Heart right ventricle (tissue), 16 donors: ENCODE measurements at regions of chr1 and their contacts with region 1.

Region 1: DNA sequence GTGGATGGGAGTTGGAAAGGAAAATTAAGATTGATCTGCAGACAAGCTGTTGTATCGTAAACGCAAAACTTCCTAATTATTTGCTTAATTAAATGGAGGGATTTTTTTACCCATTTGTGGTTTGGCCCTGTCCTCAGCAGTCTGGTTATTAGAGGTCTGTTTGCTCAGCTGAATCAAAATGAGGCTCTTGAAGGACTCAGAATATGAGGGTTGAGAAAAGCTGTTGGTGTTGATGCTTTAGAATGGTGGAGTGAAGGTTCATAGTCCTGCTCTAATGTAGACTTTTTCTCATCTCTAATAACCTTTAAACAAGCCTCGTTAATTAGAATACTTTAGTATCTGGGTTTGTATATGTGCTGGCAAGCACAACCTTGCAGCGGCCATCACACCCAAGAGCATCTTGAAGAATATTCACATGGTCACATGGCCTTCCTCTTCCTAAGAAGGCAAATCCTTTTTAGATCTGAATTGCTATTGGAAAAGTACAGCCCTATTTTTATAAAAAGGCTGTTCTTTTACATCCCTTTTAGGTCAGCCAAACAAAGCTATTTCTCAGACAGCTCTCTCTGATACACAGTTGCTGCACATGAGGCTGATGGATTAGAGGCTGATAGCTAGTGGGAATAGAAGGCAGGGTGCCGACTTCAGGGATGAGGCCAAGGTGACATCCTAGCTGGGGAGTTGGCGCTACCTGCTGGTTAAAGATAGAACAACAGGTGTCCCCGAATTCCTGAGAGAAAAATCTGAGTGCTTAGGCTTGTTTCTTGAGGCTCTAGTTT is 53.8 kb downstream of the MACF1 start:
- DNase-seq: peak; percentile 26 to 75
- ATAC-seq: peak; percentile 73 to 87 (median 86)
- H3K4me3 ChIP-seq: no peak overlapping the region
- H3K27ac ChIP-seq: peak overlapping the region in 7 of 10 donors; percentile 11 to 63 (median 49)
- H3K4me1 ChIP-seq: peaks cover 0 to 43% (median 22%) of the 10 kb centered on the region in 9 donors
- H3K27me3 ChIP-seq: no peaks in the 10 kb centered on the region
- CTCF ChIP-seq: peak; percentile 80 to 91 (median 85)

Region 2: GRCh38 chr1:39183503-39184353 is 74.6 kb before region 1 on chr1:
- intact Hi-C with region 1: no loop called
- DNase-seq: peak in 1 of 2 donors; percentile 27
- ATAC-seq: peak; percentile 35 to 86 (median 74)
- H3K4me3 ChIP-seq: no peak overlapping the region
- H3K27ac ChIP-seq: peak overlapping the region in 4 of 10 donors; percentile 8 to 49 (median 36)
- H3K4me1 ChIP-seq: peaks cover 2 to 45% (median 30%) of the 10 kb centered on the region in 9 donors
- H3K27me3 ChIP-seq: no peaks in the 10 kb centered on the region
- CTCF ChIP-seq: peak in 8 of 9 donors; percentile 7 to 54 (median 47)

Region 3: DNA sequence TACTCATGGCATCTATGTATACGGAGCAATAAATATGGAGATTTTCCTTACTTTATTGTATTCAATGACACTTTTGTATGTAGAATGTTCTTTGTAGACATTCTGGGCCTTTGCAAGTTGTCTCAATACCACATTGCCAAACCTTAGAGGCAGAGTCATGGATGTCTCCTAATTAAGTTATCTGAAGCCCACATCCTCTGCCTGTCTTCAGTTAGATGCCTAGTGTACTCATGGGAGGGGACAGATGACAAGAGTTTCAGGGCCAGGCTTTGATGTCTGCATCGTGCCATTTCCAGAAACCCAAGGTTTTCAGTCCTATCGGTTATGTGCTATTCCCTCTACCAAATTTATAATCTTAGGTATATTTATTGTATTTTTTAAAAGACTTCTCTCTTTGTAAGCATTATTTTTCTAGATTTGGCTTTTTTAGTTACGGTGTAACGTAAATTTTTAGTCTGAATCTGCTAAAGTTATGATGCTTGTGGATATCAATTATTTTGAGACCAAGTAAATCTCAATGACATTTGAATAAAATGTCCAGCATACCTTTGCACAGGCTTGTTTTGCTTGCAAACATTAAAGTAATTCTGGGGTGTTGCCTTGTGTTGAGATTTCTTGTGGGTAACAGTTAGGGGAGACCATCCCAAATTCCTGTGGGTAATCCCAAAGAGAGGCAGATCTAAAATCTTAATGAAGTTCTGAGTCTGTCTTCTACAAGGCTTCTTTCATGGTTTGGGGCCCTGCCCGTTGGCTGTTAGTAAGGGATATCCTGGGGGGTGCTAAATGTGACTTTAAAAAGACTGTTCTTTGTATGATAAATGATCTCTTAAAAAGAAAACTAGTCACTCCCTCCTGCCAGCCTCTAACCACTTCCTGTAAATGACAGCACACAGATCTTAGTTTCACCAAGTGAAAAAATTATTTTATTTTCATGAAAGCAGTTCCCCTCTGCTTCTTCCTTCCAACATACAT is 61.8 kb before region 1 on chr1:
- intact Hi-C with region 1: loop called (anchors 1 to 5 kb)
- DNase-seq: peak in 1 of 2 donors; percentile 21
- ATAC-seq: no peak
- H3K4me3 ChIP-seq: no peak overlapping the region
- H3K27ac ChIP-seq: peak overlapping the region in 5 of 10 donors; percentile 30 to 83 (median 44)
- H3K4me1 ChIP-seq: peaks cover 3 to 66% (median 46%) of the 10 kb centered on the region in 9 donors
- H3K27me3 ChIP-seq: no peaks in the 10 kb centered on the region
- CTCF ChIP-seq: no peak

Region 4: DNA sequence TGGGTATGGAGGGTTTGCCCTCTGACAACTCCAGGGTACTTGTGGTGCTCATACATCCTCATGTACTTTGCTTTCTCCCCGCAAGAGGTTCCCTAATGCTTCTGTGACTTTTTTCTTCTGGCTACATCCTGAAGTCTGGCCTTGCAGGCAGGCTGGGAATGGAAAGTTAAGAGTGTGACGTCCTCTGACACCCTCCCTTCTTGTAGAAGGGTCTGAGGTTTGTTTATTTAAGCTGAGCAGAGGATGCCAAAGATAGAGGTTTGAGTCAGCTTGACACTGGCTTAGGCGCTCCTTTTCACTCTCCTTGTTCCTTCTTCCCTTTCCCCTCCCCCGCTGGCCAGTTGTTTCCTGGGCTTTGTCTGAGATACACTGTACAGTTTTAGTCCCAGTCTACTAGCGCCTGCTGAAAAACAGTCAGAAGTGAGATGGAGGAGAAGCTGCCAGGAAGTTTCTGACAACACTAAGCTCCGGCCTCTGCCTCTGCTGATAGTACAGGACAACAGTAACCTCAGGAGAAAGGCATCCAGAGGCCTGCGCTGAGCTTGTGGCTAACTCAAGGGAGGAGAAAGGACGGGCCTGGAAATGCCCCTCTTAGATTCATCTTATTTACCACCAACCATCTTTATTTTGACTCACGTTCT is 53.8 kb before region 1 on chr1 and contains the start of gene MACF1:
- intact Hi-C with region 1: loop called in 6 of 10 experiments (anchors 5 kb)
- DNase-seq: peak; percentile 45 to 84
- ATAC-seq: peak; percentile 86 to 92 (median 90)
- H3K4me3 ChIP-seq: peak within 1 kb of the TSS; percentile 23 to 69 (median 48)
- H3K27ac ChIP-seq: peak within 1 kb of the TSS; percentile 77 to 98 (median 90)
- H3K4me1 ChIP-seq: peaks cover 0 to 68% (median 34%) of the 10 kb centered on the region in 9 donors
- H3K27me3 ChIP-seq: no peaks in the 10 kb centered on the region
- CTCF ChIP-seq: peak; percentile 18 to 68 (median 48)
- total RNA-seq, gene MACF1: 157 to 379 (median 325) TPM